Mucosa of descending colon (tissue), 3 donors: ENCODE measurements at regions of chr18 and their contacts with region 1.

Region 1: DNA sequence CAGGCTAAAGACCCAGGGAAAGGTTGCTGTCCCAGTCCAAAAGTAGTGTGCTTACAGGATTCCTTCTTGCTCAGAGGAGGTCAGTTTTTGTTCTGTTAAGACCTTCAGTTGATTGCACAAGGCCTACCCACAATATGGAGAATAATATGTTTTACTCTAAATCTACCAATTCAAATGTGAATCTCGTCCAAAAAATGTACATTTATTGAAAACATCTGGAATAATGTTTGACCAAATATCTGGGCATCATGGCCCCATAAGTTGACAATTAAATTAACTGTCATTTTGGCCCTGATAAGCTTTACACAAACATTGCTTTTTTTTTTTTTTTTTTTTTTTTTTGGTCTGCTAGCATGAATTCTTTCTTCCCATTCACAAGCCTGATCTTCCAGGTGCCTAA is 109.8 kb downstream of the CCDC178 start:
- DNase-seq: no peak
- ATAC-seq: no peak
- H3K4me3 ChIP-seq: no peak overlapping the region
- H3K4me1 ChIP-seq: no peaks in the 10 kb centered on the region
- CTCF ChIP-seq: no peak

Region 2: GRCh38 chr18:33277431-33277830 is 53.3 kb before region 1 on chr18:
- intact Hi-C with region 1: loop called in 1 of 2 experiments (anchors 10 kb)
- DNase-seq: no peak
- ATAC-seq: no peak
- H3K4me3 ChIP-seq: no peak overlapping the region
- H3K4me1 ChIP-seq: no peaks in the 10 kb centered on the region
- CTCF ChIP-seq: no peak

Region 3: GRCh38 chr18:33470216-33470615 is 139.5 kb after region 1 on chr18:
- intact Hi-C with region 1: no loop called
- DNase-seq: no peak
- ATAC-seq: no peak
- H3K4me3 ChIP-seq: no peak overlapping the region
- H3K4me1 ChIP-seq: no peaks in the 10 kb centered on the region
- CTCF ChIP-seq: no peak